Motor neuron (in vitro differentiated cells): ENCODE measurements at regions of chr3 and their contacts with region 1.

Region 1: GRCh38 chr3:17233398-17233800 is 348.6 kb downstream of the PLCL2 start:
- ATAC-seq: peak; percentile 64 to 92 (median 84)
- H3K4me3 ChIP-seq: no peak overlapping the region
- H3K27ac ChIP-seq: no peak overlapping the region
- H3K4me1 ChIP-seq: peaks cover 0 to 12% of the 10 kb centered on the region in 2 donors

Region 2: DNA sequence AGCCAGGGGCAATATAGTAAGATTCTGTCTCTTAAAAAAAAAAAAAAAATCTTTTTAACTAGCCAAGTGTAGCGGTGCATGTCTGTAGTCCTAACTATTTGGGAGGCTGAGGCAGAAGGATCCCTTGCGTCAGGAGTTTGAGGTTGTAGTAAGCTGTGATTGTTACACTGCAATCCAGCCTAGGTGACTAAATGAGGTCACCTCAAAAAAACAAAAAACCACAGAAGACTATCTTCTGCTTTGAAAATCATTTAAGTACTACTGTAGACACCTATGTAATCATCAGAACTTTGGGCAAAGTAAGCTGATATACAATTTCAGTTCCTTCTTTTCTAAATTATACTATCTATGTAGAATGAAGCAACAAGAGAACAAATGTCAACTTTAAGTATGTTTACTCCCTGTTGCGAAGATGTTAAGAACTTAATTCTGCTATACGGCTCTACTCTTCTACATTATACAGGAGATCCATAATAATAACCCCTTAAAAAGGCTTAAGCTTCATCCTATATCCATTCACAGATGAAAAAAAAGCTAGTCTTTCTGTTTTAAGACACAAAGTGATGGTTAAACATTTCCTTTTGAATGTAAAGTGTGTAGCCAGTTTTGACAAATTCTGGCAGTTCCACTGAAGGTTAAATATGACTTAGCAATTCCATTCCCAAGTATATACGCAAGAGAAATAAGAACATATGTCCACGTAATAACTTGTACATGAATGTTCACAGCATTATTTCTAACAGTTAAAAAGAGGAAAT is 643.4 kb before region 1 on chr3:
- in situ Hi-C with region 1: loop called in 1 of 9 experiments (anchors 25 kb)
- ATAC-seq: no peak
- H3K4me3 ChIP-seq: no peak overlapping the region
- H3K27ac ChIP-seq: no peak overlapping the region
- H3K4me1 ChIP-seq: no peaks in the 10 kb centered on the region

Region 3: GRCh38 chr3:16801698-16802097 is 431.7 kb before region 1 on chr3:
- in situ Hi-C with region 1: no loop called
- ATAC-seq: peak; percentile 17 to 81 (median 62)
- H3K4me3 ChIP-seq: no peak overlapping the region
- H3K27ac ChIP-seq: no peak overlapping the region
- H3K4me1 ChIP-seq: peaks cover 0 to 13% of the 10 kb centered on the region in 2 donors

Region 4: GRCh38 chr3:18049096-18049495 is 815.7 kb after region 1 on chr3:
- in situ Hi-C with region 1: no loop called
- ATAC-seq: no peak
- H3K4me3 ChIP-seq: no peak overlapping the region
- H3K27ac ChIP-seq: no peak overlapping the region
- H3K4me1 ChIP-seq: peaks cover 0 to 15% of the 10 kb centered on the region in 2 donors